Psoas muscle (tissue), 8 donors: ENCODE measurements at regions of chr22 and their contacts with region 1.

Region 1: GRCh38 chr22:23913661-23914353 is 19.6 kb downstream of the MIF start:
- DNase-seq: peak; percentile 100
- ATAC-seq: peak; percentile 99 to 100 (median 100)
- H3K4me3 ChIP-seq: peak overlapping the region; percentile 70
- H3K27ac ChIP-seq: peak overlapping the region; percentile 82
- H3K4me1 ChIP-seq: no peaks in the 10 kb centered on the region
- H3K27me3 ChIP-seq: no peaks in the 10 kb centered on the region
- CTCF ChIP-seq: no peak

Region 2: GRCh38 chr22:23622634-23623033 is 291.2 kb before region 1 on chr22:
- intact Hi-C with region 1: no loop called
- DNase-seq: no peak
- ATAC-seq: peak in 3 of 4 donors; percentile 70 to 76 (median 70)
- H3K4me3 ChIP-seq: no peak overlapping the region
- H3K27ac ChIP-seq: no peak overlapping the region
- H3K4me1 ChIP-seq: no peaks in the 10 kb centered on the region
- H3K27me3 ChIP-seq: no peaks in the 10 kb centered on the region
- CTCF ChIP-seq: no peak

Region 3: GRCh38 chr22:24555157-24556039 is 641.6 kb after region 1 on chr22 and contains the start of gene SNRPD3:
- intact Hi-C with region 1: loop called in 1 of 2 experiments (anchors 10 kb)
- DNase-seq: peak; percentile 100
- ATAC-seq: peak; percentile 88 to 92 (median 90)
- H3K4me3 ChIP-seq: peak within 1 kb of the TSS; percentile 87
- H3K27ac ChIP-seq: peak within 1 kb of the TSS; percentile 95
- H3K4me1 ChIP-seq: peaks cover 58% of the 10 kb centered on the region
- H3K27me3 ChIP-seq: no peaks in the 10 kb centered on the region
- CTCF ChIP-seq: peak; percentile 16
- total RNA-seq, gene SNRPD3: 68.8 to 90.5 (median 75.8) TPM